Activated naive CD4-positive, alpha-beta T cell treated with anti-CD3 and anti-CD28 coated beads for 36 hours (primary cell): ENCODE measurements at regions of chr7 and their contacts with region 1.

Region 1: GRCh38 chr7:8436965-8437364 is 3.6 kb downstream of the NXPH1 start:
- DNase-seq: peak; percentile 71
- H3K4me3 Mint-ChIP-seq: no peak overlapping the region
- H3K27ac Mint-ChIP-seq: no peak overlapping the region
- H3K4me1 Mint-ChIP-seq: peaks cover 30% of the 10 kb centered on the region
- H3K27me3 Mint-ChIP-seq: peaks cover 89% of the 10 kb centered on the region

Region 2: GRCh38 chr7:8480527-8480926 is 43.6 kb after region 1 on chr7:
- CTCF ChIA-PET with region 1: no interaction called
- intact Hi-C with region 1: no loop called
- DNase-seq: no peak
- H3K4me3 Mint-ChIP-seq: no peak overlapping the region
- H3K27ac Mint-ChIP-seq: no peak overlapping the region
- H3K4me1 Mint-ChIP-seq: no peaks in the 10 kb centered on the region
- H3K27me3 Mint-ChIP-seq: peaks cover 6% of the 10 kb centered on the region

Region 3: GRCh38 chr7:8724080-8724718 is 287.2 kb after region 1 on chr7:
- CTCF ChIA-PET with region 1: interaction called, 3 read pairs
- intact Hi-C with region 1: loop called (anchors 1 kb)
- DNase-seq: peak; percentile 47
- H3K4me3 Mint-ChIP-seq: no peak overlapping the region
- H3K27ac Mint-ChIP-seq: no peak overlapping the region
- H3K4me1 Mint-ChIP-seq: no peaks in the 10 kb centered on the region
- H3K27me3 Mint-ChIP-seq: no peaks in the 10 kb centered on the region

Region 4: DNA sequence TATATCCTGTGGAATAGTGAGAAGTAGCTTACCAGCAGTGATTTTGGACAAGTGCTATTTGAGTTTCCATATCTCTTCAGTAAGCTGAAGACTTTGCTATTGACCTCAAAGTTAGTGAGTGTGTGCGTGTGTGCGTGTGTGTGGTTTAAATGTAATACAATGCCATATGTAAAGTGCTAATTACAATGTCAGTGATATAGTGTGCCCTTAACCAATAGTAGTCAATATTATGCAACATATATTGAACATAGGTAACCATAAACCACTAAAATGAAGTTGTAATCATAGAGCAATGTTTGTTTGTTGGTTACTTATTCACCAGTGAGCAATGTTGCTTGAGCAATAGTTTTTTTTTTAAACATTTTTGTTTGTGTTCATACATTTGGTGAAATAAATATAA is 305.9 kb after region 1 on chr7:
- CTCF ChIA-PET with region 1: no interaction called
- intact Hi-C with region 1: no loop called
- DNase-seq: no peak
- H3K4me3 Mint-ChIP-seq: no peak overlapping the region
- H3K27ac Mint-ChIP-seq: no peak overlapping the region
- H3K4me1 Mint-ChIP-seq: no peaks in the 10 kb centered on the region
- H3K27me3 Mint-ChIP-seq: no peaks in the 10 kb centered on the region

Region 5: DNA sequence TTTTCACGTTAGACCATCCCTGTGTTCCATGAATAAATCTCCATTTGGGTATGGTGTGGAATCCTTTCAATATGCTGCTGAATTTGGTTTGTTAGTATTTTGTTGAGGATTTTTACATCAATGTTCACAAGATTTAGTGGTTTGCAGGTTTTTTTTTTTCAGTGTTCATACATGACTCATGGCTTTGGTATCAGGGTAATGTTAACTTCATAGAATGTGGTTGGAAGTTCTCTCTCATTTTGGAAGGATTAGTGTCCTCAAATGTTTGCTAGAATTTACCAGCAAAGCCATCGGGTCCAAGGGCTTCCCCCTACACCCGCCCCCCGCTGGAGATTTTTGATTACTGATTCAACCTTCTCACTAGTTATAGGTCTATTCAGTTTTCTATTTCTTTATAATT is 394.4 kb after region 1 on chr7:
- CTCF ChIA-PET with region 1: no interaction called
- intact Hi-C with region 1: no loop called
- DNase-seq: no peak
- H3K4me3 Mint-ChIP-seq: no peak overlapping the region
- H3K27ac Mint-ChIP-seq: no peak overlapping the region
- H3K4me1 Mint-ChIP-seq: no peaks in the 10 kb centered on the region
- H3K27me3 Mint-ChIP-seq: no peaks in the 10 kb centered on the region

Region 6: GRCh38 chr7:10412422-10413019 is 1975.6 kb after region 1 on chr7:
- CTCF ChIA-PET with region 1: no interaction called
- intact Hi-C with region 1: loop called (anchors 5 kb)
- DNase-seq: peak; percentile 29
- H3K4me3 Mint-ChIP-seq: no peak overlapping the region
- H3K27ac Mint-ChIP-seq: no peak overlapping the region
- H3K4me1 Mint-ChIP-seq: no peaks in the 10 kb centered on the region
- H3K27me3 Mint-ChIP-seq: no peaks in the 10 kb centered on the region